Activated B cell treated with CpG ODN at 0.5 μM for 24 hours (primary cell): ENCODE measurements at regions of chr3 and their contacts with region 1.

Region 1: GRCh38 chr3:129893581-129894070 is at the start of gene TMCC1:
- DNase-seq: peak; percentile 92
- ATAC-seq: peak; percentile 90
- H3K4me3 Mint-ChIP-seq: peak within 1 kb of the TSS; percentile 87
- H3K27ac Mint-ChIP-seq: peak within 1 kb of the TSS; percentile 88
- H3K4me1 Mint-ChIP-seq: peaks cover 34% of the 10 kb centered on the region
- H3K27me3 Mint-ChIP-seq: no peaks in the 10 kb centered on the region
- CTCF ChIP-seq: no peak
- total RNA-seq, gene TMCC1: 25.8 and 25.9 TPM in 2 replicates

Region 2: GRCh38 chr3:128650096-128651050 is 1243.3 kb before region 1 on chr3 and contains the start of gene RPN1:
- CTCF ChIA-PET with region 1: no interaction called
- POLR2A ChIA-PET with region 1: no interaction called
- intact Hi-C with region 1: loop called (anchors 10 kb)
- DNase-seq: peak; percentile 90
- ATAC-seq: peak; percentile 97
- H3K4me3 Mint-ChIP-seq: peak within 1 kb of the TSS; percentile 89
- H3K27ac Mint-ChIP-seq: peak within 1 kb of the TSS; percentile 86
- H3K4me1 Mint-ChIP-seq: peaks cover 41% of the 10 kb centered on the region
- H3K27me3 Mint-ChIP-seq: no peaks in the 10 kb centered on the region
- CTCF ChIP-seq: no peak
- total RNA-seq, gene RPN1: 93.4 and 95.2 TPM in 2 replicates

Region 3: DNA sequence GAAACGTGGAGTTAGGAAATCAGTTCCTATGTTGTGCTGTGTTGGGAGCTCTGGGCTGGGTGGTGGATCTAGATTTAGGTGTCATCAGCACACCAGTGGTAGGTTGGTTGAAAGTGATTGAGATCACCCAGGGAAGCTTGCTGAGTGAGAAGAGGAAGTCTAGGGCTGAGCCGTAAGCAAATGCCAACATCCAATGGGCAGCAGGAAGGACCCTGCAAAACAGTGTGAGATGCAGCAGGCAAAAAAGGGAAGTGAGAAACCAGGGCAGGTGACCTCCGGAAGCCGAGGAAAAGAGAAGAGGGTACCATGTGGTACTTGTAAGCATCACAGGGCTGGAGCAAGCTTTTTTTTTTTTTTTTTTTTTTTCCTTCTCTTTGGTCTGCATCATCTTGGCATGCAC is 660.1 kb before region 1 on chr3:
- CTCF ChIA-PET with region 1: no interaction called
- POLR2A ChIA-PET with region 1: interaction called, 5 read pairs
- intact Hi-C with region 1: loop called (anchors 1 kb)
- DNase-seq: peak; percentile 53
- ATAC-seq: peak; percentile 93
- H3K4me3 Mint-ChIP-seq: peak overlapping the region; percentile 50
- H3K27ac Mint-ChIP-seq: peak overlapping the region; percentile 88
- H3K4me1 Mint-ChIP-seq: peaks cover 52% of the 10 kb centered on the region
- H3K27me3 Mint-ChIP-seq: no peaks in the 10 kb centered on the region
- CTCF ChIP-seq: no peak

Region 4: GRCh38 chr3:129690406-129690805 is 203.2 kb before region 1 on chr3:
- CTCF ChIA-PET with region 1: no interaction called
- POLR2A ChIA-PET with region 1: interaction called, 4 read pairs
- intact Hi-C with region 1: loop called (anchors 5 kb)
- DNase-seq: no peak
- ATAC-seq: peak; percentile 100
- H3K4me3 Mint-ChIP-seq: no peak overlapping the region
- H3K27ac Mint-ChIP-seq: no peak overlapping the region
- H3K4me1 Mint-ChIP-seq: peaks cover 4% of the 10 kb centered on the region
- H3K27me3 Mint-ChIP-seq: no peaks in the 10 kb centered on the region
- CTCF ChIP-seq: no peak

Region 5: GRCh38 chr3:129868912-129869311 is 24.7 kb before region 1 on chr3:
- CTCF ChIA-PET with region 1: no interaction called
- POLR2A ChIA-PET with region 1: no interaction called
- intact Hi-C with region 1: no loop called
- DNase-seq: no peak
- ATAC-seq: no peak
- H3K4me3 Mint-ChIP-seq: no peak overlapping the region
- H3K27ac Mint-ChIP-seq: no peak overlapping the region
- H3K4me1 Mint-ChIP-seq: peaks cover 12% of the 10 kb centered on the region
- H3K27me3 Mint-ChIP-seq: no peaks in the 10 kb centered on the region
- CTCF ChIP-seq: no peak

Region 6: GRCh38 chr3:129927072-129927471 is 33.4 kb after region 1 on chr3:
- CTCF ChIA-PET with region 1: no interaction called
- POLR2A ChIA-PET with region 1: no interaction called
- intact Hi-C with region 1: no loop called
- DNase-seq: no peak
- ATAC-seq: no peak
- H3K4me3 Mint-ChIP-seq: no peak overlapping the region
- H3K27ac Mint-ChIP-seq: no peak overlapping the region
- H3K4me1 Mint-ChIP-seq: peaks cover 3% of the 10 kb centered on the region
- H3K27me3 Mint-ChIP-seq: peaks cover 15% of the 10 kb centered on the region
- CTCF ChIP-seq: no peak

Region 7: GRCh38 chr3:129994883-129995559 is 101.4 kb after region 1 on chr3:
- CTCF ChIA-PET with region 1: no interaction called
- POLR2A ChIA-PET with region 1: no interaction called
- intact Hi-C with region 1: loop called (anchors 5 kb)
- DNase-seq: no peak
- ATAC-seq: no peak
- H3K4me3 Mint-ChIP-seq: no peak overlapping the region
- H3K27ac Mint-ChIP-seq: no peak overlapping the region
- H3K4me1 Mint-ChIP-seq: no peaks in the 10 kb centered on the region
- H3K27me3 Mint-ChIP-seq: peaks cover 26% of the 10 kb centered on the region
- CTCF ChIP-seq: no peak